ENCODE measurements at regions of chr4 and their contacts with region 1.

Region 1: DNA sequence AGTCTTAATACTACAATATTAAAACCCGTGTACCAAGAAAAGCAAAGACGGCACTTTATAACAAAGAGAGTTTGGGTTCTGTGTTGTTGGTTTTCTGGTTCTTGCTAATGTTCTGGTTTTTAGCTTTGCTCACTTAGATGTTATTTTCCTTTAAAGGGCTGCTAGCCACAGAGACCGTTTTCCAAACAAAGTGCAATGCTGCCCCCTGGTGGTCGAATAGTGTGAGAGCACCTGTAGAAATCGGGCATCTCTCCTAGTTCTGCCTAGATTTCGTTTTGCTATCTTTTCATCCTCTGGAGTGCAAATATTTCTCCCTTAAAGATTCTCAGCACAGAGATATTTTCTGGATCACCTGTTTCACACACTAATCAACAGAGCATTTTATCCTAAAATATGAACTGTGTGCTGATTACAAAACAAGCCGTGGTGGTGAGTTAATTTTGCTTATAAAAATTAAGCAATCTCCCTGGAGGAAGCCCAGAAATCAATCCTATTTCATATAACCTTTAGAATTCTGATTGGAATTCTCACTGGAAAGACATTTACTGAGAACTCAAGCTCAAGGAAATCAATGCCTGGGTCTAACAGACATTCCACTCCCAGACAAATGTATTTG is 334.5 kb upstream of the NOCT start:
- DNase-seq: peak; percentile 77
- ATAC-seq: peak; percentile 65

Region 2: GRCh38 chr4:137819964-137820383 is 861.1 kb before region 1 on chr4:
- intact Hi-C with region 1: loop called (anchors 5 kb)
- DNase-seq: no peak
- ATAC-seq: no peak

Region 3: DNA sequence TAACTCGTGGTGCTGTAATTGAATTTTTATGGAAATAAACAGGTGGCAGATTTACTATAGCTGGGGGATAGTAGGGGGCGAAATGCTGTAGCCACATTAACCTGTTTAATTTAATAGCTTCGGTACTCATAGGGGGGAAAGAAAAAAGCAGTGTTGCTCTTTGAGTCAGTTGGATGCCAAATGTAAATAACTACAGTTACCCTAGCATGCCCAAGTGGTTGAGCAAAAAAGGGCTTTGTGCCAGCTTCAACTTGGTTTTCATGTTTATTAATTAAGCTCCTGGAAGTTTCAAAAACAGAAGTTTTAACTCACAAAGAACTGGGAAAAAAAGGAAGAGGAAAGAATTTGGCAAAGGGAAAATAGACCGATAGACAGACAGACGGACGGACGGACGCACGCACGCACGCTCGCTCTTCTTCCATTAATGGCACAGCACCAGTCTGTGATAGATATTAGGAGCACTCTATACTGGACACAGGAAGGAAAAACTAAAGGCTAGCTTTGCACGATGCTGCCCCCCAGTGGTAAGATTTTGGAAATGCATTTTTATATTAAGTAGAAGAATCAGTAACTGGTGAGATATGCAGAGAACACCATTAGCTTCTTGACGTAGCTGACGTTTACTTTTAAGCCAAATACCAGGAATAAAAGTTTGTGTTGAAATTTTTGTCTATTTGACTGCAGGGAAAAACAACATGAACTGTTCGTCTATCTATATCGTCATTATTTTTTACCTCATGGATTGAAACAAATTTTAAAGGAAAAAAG is 590.8 kb before region 1 on chr4:
- intact Hi-C with region 1: loop called (anchors 5 kb)
- DNase-seq: no peak
- ATAC-seq: peak; percentile 76

Region 4: GRCh38 chr4:138405934-138406567 is 275.0 kb before region 1 on chr4:
- intact Hi-C with region 1: loop called (anchors 5 kb)
- DNase-seq: no peak
- ATAC-seq: no peak

Region 5: DNA sequence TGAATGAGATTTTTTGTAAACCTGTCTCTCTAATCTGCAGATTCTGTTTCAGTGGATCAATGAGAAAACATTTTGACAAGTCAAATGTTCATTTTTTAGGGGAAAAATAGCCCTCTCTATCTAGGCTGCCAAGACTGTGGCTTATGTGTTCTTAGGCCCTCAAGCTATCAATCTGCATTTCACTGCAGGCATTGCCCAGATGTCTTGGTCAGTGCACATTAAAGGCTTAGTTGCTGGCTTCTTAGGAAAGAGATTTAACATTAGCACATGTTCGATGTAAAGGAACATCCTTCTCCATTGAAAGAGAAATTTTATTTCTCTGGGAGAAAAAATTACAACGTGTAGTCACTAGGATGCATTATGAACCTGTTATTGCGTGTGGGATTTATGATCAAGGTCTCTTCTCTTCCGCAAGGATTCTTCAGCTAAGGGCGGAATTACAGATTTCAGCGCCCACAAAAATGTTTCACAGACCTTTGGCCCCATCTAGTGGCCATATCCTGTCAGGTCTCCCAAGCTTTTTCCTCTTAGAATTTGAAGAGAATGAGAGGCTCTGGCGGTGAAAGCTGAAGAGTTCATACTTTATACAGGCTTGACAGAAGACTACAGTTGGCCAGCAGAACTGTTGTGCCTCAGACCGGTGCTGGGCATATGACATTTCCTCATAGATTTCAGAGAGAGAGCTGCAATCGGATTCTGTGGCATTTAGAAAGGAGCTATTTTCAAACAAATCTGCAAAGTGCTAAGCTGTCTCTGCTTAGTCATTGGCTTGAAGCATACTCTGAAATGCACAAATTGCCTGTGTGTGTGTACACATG is 189.8 kb after region 1 on chr4:
- intact Hi-C with region 1: loop called (anchors 1 kb)
- DNase-seq: no peak
- ATAC-seq: peak; percentile 53

Measured in Right ventricle myocardium inferior (tissue), 1 donor.